ENCODE measurements at regions of chr5 and their contacts with region 1.

Region 1: DNA sequence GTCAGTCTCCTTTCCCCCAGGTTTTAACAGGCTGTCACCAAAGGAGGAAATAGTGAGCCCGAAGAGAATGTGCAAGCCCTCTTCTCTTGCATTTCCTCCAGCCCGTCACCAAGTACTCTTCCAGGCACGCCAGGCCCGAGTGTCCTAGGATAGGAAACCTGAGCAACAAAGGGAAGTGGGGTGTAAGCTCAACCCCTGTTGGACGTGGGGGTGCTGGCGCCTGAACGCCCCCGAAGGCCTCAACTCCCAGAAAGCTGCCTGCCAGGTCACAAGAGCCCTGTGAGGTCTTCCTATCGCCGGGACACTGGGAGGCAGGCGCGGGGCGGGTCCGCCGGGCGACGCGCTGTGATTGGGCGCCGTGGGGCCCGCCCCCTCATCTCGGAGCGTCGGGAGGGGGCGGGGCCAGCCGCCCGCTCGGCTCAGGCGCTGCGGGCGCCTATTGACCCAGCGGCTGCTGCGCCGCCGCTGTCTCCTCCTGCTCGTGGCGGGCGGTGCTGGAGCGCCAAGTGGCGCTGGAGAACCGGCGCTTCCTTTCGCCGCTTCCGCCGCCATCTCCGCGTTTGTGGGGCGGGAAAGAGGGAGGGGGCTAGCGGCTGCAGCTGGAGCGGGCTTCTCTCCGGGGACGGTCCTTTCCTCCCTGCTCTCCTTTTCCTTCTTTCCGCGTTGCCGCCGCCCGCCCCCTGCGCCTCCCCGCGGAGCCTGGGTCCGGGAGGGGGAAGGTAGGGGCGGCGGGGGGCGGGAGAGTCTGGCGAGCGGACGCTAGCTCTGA is 572 bp upstream of the MAN2A1 start:
- DNase-seq: peak; percentile 94
- H3K4me3 Mint-ChIP-seq: peak overlapping the region; percentile 93
- H3K27ac Mint-ChIP-seq: peak overlapping the region; percentile 95
- H3K4me1 Mint-ChIP-seq: peaks cover 35% of the 10 kb centered on the region
- H3K27me3 Mint-ChIP-seq: peaks cover 5% of the 10 kb centered on the region

Region 2: GRCh38 chr5:108748401-108749127 is 940.6 kb before region 1 on chr5:
- intact Hi-C with region 1: loop called (anchors 1 kb)
- DNase-seq: peak; percentile 99
- H3K4me3 Mint-ChIP-seq: peak overlapping the region; percentile 87
- H3K27ac Mint-ChIP-seq: peak overlapping the region; percentile 84
- H3K4me1 Mint-ChIP-seq: peaks cover 8% of the 10 kb centered on the region
- H3K27me3 Mint-ChIP-seq: peaks cover 37% of the 10 kb centered on the region

Region 3: GRCh38 chr5:109718216-109718615 is 29.1 kb after region 1 on chr5:
- intact Hi-C with region 1: no loop called
- DNase-seq: no peak
- H3K4me3 Mint-ChIP-seq: no peak overlapping the region
- H3K27ac Mint-ChIP-seq: no peak overlapping the region
- H3K4me1 Mint-ChIP-seq: peaks cover 8% of the 10 kb centered on the region
- H3K27me3 Mint-ChIP-seq: no peaks in the 10 kb centered on the region

Region 4: GRCh38 chr5:109863752-109864151 is 174.6 kb after region 1 on chr5:
- intact Hi-C with region 1: loop called (anchors 5 kb)
- DNase-seq: no peak
- H3K4me3 Mint-ChIP-seq: no peak overlapping the region
- H3K27ac Mint-ChIP-seq: no peak overlapping the region
- H3K4me1 Mint-ChIP-seq: peaks cover 24% of the 10 kb centered on the region
- H3K27me3 Mint-ChIP-seq: no peaks in the 10 kb centered on the region

Region 5: GRCh38 chr5:110054240-110054639 is 365.1 kb after region 1 on chr5:
- intact Hi-C with region 1: loop called (anchors 1 kb)
- DNase-seq: peak; percentile 92
- H3K4me3 Mint-ChIP-seq: peak overlapping the region; percentile 18
- H3K27ac Mint-ChIP-seq: peak overlapping the region; percentile 74
- H3K4me1 Mint-ChIP-seq: peaks cover 21% of the 10 kb centered on the region
- H3K27me3 Mint-ChIP-seq: no peaks in the 10 kb centered on the region

Region 6: DNA sequence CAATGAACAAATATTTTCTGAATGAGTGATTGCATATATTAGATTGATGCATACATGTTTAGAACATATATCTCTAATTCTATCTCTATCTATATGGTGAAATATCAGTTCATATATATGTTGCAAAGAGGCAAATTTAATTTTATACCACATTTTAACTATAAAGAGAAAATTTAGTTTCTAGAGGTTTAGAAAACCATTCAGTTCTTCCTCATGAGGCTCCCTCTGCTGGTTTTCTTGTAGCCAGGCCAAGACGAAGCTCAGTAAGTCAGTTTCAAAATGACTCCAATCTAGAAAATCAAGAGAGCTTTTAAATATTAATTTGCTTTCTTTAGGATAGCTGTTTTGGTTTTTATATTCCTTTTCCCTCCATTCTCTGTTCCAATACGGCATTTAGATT is 725.2 kb after region 1 on chr5:
- intact Hi-C with region 1: loop called (anchors 10 kb)
- DNase-seq: no peak
- H3K4me3 Mint-ChIP-seq: no peak overlapping the region
- H3K27ac Mint-ChIP-seq: no peak overlapping the region
- H3K4me1 Mint-ChIP-seq: no peaks in the 10 kb centered on the region
- H3K27me3 Mint-ChIP-seq: peaks cover 2% of the 10 kb centered on the region

Measured in activated CD4-positive, alpha-beta T cell treated with anti-CD3 and anti-CD28 coated beads, Interleukin-2, amount 10 ng/mL, durations not matched to agents 24 days and 14 days (primary cell).